ENCODE measurements at regions of chr17 and their contacts with region 1.

Region 1: DNA sequence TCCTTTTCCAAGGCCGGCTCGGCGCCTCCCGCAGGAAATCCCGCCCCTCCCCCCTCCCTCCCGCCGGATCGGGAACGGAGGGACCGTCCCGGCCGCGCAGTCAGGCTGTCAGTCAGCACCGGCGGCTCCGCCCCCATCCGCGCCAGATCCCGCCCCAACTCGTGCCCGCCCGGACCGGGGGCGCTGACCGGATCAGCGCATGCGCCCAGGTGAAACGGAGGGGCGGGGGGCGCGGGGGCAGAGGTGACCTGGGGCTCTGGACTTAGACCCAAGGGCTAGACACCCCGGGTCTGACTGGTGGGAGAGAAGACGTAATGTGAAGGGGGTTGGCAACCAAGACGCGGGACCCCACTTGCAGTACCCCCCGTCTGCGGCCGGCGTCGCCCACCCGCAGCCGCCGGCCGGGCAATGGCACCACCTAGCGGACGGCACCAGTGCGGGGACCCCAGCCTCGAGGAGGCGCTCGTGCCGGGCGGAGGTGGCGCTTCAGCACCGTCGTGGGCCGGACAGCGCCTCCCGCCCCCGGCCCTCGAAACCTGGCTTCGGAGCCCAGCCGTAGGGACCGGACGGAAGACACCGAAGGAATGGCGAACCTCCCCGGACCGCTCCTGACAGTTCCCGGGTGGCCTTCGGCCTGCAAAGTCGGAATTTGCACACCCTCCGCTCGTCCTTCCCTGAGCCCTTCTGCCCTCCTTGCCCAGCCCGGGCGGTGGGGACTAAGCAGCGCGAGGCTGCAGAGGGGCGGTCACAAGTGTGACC is at the start of gene CASKIN2:
- DNase-seq: no peak
- H3K4me3 ChIP-seq: peak within 1 kb of the TSS; percentile 82 to 97
- H3K27ac ChIP-seq: peak within 1 kb of the TSS; percentile 92
- H3K4me1 ChIP-seq: peaks cover 58% of the 10 kb centered on the region
- H3K27me3 ChIP-seq: no peaks in the 10 kb centered on the region
- CTCF ChIP-seq: peak; percentile 74 to 96 (median 89)
- POLR2A ChIP-seq: no peak
- total RNA-seq, gene CASKIN2: 19.9 TPM

Region 2: GRCh38 chr17:75428543-75429469 is 86.9 kb before region 1 on chr17:
- intact Hi-C with region 1: loop called (anchors 5 kb)
- DNase-seq: no peak
- H3K4me3 ChIP-seq: no peak overlapping the region
- H3K27ac ChIP-seq: peak overlapping the region; percentile 69
- H3K4me1 ChIP-seq: peaks cover 17% of the 10 kb centered on the region
- H3K27me3 ChIP-seq: no peaks in the 10 kb centered on the region
- CTCF ChIP-seq: no peak
- POLR2A ChIP-seq: no peak

Region 3: GRCh38 chr17:75481194-75482068 is 34.2 kb before region 1 on chr17:
- intact Hi-C with region 1: loop called (anchors 2 kb)
- DNase-seq: no peak
- H3K4me3 ChIP-seq: no peak overlapping the region
- H3K27ac ChIP-seq: no peak overlapping the region
- H3K4me1 ChIP-seq: peaks cover 25% of the 10 kb centered on the region
- H3K27me3 ChIP-seq: no peaks in the 10 kb centered on the region
- CTCF ChIP-seq: no peak
- POLR2A ChIP-seq: no peak